AG04449 (cell line): ENCODE measurements at regions of chr5 and their contacts with region 1.

Region 1: DNA sequence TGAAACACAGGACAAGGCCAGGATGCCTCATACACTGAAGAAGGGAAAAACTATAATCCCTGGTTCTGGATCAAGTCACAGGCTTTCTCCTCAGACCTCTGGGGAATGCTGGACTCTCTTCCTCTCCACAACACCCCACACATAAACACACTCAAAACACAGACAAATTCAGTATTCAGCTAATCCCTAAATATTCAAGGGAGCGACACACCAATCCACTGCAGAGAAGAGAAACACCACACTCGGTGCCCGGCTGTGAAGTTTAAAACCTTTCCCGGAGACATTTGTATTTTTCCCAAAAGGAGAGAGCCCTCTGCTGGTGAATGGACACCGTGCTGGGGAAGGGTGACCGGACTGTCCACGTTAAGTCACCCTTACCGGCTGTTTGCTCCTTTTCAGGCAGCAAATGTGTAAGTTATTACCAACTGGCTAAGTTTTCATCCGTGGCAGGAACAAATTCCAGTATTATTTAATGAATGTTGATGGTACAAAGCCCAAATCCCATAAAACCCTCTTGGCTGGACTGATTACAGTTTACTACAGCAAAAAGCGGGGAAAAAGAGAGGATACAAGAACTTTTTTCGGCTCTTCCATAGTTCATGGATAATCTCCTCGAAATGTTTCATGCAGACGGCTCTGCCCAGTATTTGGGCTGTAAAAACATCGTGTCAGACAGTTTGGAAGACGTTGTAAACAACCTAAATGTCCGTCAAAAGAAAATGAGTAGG is 130.9 kb upstream of the SLC30A5 start:
- DNase-seq: no peak
- H3K4me3 ChIP-seq: no peak overlapping the region
- CTCF ChIP-seq: peak; percentile 82

Region 2: DNA sequence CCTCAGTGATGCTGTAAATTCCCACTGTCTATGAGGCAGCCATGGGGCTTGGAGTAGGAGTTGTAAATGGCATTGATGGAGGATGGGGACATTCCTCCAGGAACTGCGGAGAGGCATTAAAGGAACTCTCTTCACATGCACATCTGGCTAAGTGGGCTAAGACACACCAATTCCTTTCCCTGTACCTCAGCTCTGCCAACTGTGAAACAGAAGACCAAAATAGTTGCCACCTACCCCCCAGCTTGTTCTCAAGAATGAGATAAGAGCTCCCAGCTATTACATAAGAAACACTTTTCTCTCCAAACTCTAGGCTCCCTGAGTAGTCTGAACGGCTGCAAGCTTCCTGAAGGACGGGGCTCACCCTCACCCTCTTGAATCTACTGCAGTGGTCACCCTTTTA is 13.7 kb before region 1 on chr5:
- CTCF ChIA-PET with region 1: interaction called, 14 read pairs
- POLR2A ChIA-PET with region 1: no interaction called
- DNase-seq: no peak
- H3K4me3 ChIP-seq: no peak overlapping the region
- CTCF ChIP-seq: no peak

Region 3: DNA sequence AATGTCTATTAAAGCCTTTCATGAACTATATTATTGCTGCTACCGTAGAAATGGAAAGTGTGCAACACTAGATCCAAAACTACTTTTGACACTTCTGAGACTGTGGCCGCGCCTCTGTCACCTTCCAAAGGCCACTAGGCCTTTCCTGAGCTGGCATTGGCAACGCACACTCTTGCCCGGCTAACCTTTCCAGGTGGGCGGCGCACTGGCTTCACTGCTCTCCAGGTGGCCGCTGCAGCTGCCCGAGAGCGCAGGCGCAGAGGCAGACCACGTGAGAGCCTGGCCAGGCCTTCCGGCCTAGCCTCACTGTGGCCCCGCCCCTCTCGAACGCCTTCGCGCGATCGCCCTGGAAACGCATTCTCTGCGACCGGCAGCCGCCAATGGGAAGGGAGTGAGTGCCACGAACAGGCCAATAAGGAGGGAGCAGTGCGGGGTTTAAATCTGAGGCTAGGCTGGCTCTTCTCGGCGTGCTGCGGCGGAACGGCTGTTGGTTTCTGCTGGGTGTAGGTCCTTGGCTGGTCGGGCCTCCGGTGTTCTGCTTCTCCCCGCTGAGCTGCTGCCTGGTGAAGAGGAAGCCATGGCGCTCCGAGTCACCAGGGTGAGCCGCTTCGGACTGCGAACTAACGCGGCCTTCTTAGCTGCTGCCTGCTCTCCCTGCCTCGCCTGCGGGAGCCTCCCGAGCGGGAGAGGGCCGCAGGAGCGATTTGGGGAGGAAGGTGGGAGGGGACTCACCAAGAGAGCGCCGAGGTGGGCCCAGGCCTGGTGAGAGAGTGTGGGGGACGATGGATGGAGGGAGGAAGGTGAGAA is 204.0 kb after region 1 on chr5 and contains the start of gene CCNB1:
- CTCF ChIA-PET with region 1: no interaction called
- POLR2A ChIA-PET with region 1: no interaction called
- DNase-seq: peak; percentile 56
- H3K4me3 ChIP-seq: peak within 1 kb of the TSS; percentile 85
- CTCF ChIP-seq: no peak